ENCODE measurements at regions of chr3 and their contacts with region 1.

Region 1: DNA sequence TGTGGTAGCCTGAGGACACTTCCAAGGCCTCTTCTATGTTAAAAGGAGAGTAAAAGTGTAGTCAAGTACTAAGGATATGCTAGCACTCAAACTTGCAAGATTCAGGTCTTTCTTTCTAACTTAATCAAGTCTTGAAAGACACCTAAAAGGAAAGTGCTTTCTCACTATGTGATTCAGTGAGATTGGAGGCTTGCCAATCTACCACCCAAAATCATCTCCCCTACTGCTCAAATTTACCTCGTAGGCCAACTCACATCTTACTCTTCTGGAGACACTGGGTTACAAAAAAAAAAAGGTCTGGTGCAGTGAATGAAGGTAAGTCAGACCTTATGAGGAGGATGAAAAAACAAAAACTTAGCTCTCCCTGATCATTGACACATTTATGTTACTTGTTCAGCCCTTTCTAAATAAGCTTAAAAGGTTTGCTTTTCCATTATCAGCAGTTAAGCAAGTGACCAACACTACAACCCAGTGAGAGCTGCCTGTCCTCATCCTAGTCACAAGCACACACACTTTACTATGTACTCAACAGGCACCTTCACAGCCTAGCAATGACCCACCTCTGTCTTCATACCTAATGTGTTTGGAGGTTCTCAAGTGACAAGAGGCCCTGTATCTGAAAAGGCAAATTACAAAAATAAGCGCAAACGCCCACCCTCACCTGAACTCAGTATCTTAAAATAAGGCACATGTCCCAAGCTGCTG is 19.6 kb downstream of the SUMF1 start:
- DNase-seq: no peak
- H3K4me3 ChIP-seq: peak overlapping the region in 1 of 4 experiments; percentile 18; a peak in 1 of 8 replicates
- H3K27ac ChIP-seq: no peak overlapping the region
- H3K4me1 ChIP-seq: peaks cover 0 to 7% (median 6%) of the 10 kb centered on the region in 4 experiments; a peak in 4 of 7 replicates
- H3K27me3 ChIP-seq: no peaks in the 10 kb centered on the region
- CTCF ChIP-seq: no peak
- EP300 ChIP-seq: no peak
- POLR2A ChIP-seq: no peak
- RAD21 ChIP-seq: no peak

Region 2: GRCh38 chr3:4466741-4467521 is 19.5 kb after region 1 on chr3 and contains the start of gene SUMF1:
- CTCF ChIA-PET with region 1: interaction called, 3 read pairs
- POLR2A ChIA-PET with region 1: interaction called, 11 read pairs
- DNase-seq: peak; percentile 44 to 88
- H3K4me3 ChIP-seq: peak within 1 kb of the TSS; percentile 86 to 90 (median 87)
- H3K27ac ChIP-seq: peak within 1 kb of the TSS; percentile 85; the same call in 1 of the 2 replicates
- H3K4me1 ChIP-seq: no peaks in the 10 kb centered on the region; a peak in 1 of 7 replicates
- H3K27me3 ChIP-seq: no peaks in the 10 kb centered on the region
- CTCF ChIP-seq: no peak
- EP300 ChIP-seq: peak in 1 of 2 experiments; percentile 62; a peak in 1 of 3 replicates
- POLR2A ChIP-seq: peak; percentile 97 to 98
- RAD21 ChIP-seq: peak in 1 of 2 experiments; percentile 8; a peak in 1 of 4 replicates
- total RNA-seq, gene SUMF1: 10.0 and 12.5 TPM in 2 replicates

Measured in H1 (cell line).